CD4-positive, alpha-beta T cell (primary cell): ENCODE measurements at regions of chr11 and their contacts with region 1.

Region 1: GRCh38 chr11:64916775-64917662 is at the start of gene ATG2A:
- DNase-seq: peak; percentile 97 to 100 (median 99)
- ATAC-seq: peak; percentile 96
- H3K4me3 ChIP-seq: peak within 1 kb of the TSS; percentile 89
- H3K4me3 Mint-ChIP-seq: peak within 1 kb of the TSS; percentile 93
- H3K27ac ChIP-seq: peak within 1 kb of the TSS; percentile 66 to 78
- H3K27ac Mint-ChIP-seq: peak within 1 kb of the TSS; percentile 81
- H3K4me1 ChIP-seq: peaks cover 33% of the 10 kb centered on the region
- H3K4me1 Mint-ChIP-seq: peaks cover 26% of the 10 kb centered on the region
- H3K27me3 ChIP-seq: no peaks in the 10 kb centered on the region
- H3K27me3 Mint-ChIP-seq: no peaks in the 10 kb centered on the region
- CTCF ChIP-seq: no peak
- total RNA-seq, gene ATG2A: 189 to 198 TPM

Region 2: GRCh38 chr11:64276653-64277431 is 640.2 kb before region 1 on chr11:
- CTCF ChIA-PET with region 1: no interaction called
- POLR2A ChIA-PET with region 1: no interaction called
- intact Hi-C with region 1: no loop called
- DNase-seq: no peak
- ATAC-seq: no peak
- H3K4me3 ChIP-seq: no peak overlapping the region
- H3K4me3 Mint-ChIP-seq: no peak overlapping the region
- H3K27ac ChIP-seq: no peak overlapping the region
- H3K27ac Mint-ChIP-seq: no peak overlapping the region
- H3K4me1 ChIP-seq: peaks cover 11% of the 10 kb centered on the region
- H3K4me1 Mint-ChIP-seq: peaks cover 8% of the 10 kb centered on the region
- H3K27me3 ChIP-seq: no peaks in the 10 kb centered on the region
- H3K27me3 Mint-ChIP-seq: no peaks in the 10 kb centered on the region
- CTCF ChIP-seq: no peak

Region 3: DNA sequence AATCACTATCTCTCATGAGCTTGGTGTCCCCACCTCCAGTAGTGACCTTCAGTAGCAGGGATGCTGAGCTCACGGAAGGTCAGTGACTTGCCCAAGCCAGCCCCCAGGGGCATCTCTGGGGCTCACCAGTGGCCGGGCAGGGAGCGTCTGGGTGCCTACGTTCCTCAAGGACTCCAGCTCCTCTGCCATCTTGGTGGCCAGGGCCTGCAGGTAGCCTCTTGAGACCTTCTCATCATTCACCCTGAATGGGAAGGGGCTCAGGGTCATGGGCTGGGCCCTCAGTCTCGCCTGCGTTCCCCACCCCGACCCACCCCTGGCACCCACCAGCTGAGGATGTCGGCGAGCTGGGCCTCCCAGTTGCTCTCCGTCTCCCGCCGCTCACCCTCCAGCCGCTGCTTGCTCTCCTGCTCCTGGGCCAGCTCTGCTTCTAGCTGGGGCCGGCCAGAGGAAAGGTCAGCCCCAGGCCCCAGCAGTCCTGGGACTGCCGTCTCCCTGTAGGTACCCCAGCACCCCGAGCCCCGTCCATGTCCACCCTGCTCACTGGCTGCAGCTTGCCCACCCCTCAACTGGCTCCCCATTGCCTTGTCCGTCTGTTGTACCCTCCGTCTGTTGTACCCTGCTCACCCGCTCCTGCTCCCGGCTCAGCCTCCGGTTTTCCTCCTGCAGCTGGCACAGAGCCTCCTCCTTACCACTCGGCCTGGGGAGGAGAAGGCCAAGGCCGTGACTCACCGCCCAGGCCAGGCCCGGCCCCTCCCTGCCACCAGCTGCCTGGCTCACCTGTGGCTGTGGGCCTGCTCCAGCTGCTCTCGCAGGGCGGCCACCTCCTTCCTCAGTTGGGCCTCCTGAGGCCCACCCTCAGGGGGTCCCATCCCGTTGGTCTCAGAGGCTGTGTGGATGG is 82.0 kb before region 1 on chr11:
- CTCF ChIA-PET with region 1: no interaction called
- POLR2A ChIA-PET with region 1: no interaction called
- intact Hi-C with region 1: no loop called
- DNase-seq: no peak
- ATAC-seq: no peak
- H3K4me3 ChIP-seq: no peak overlapping the region
- H3K4me3 Mint-ChIP-seq: no peak overlapping the region
- H3K27ac ChIP-seq: no peak overlapping the region
- H3K27ac Mint-ChIP-seq: no peak overlapping the region
- H3K4me1 ChIP-seq: peaks cover 3% of the 10 kb centered on the region
- H3K4me1 Mint-ChIP-seq: no peaks in the 10 kb centered on the region
- H3K27me3 ChIP-seq: no peaks in the 10 kb centered on the region
- H3K27me3 Mint-ChIP-seq: no peaks in the 10 kb centered on the region
- CTCF ChIP-seq: no peak

Region 4: DNA sequence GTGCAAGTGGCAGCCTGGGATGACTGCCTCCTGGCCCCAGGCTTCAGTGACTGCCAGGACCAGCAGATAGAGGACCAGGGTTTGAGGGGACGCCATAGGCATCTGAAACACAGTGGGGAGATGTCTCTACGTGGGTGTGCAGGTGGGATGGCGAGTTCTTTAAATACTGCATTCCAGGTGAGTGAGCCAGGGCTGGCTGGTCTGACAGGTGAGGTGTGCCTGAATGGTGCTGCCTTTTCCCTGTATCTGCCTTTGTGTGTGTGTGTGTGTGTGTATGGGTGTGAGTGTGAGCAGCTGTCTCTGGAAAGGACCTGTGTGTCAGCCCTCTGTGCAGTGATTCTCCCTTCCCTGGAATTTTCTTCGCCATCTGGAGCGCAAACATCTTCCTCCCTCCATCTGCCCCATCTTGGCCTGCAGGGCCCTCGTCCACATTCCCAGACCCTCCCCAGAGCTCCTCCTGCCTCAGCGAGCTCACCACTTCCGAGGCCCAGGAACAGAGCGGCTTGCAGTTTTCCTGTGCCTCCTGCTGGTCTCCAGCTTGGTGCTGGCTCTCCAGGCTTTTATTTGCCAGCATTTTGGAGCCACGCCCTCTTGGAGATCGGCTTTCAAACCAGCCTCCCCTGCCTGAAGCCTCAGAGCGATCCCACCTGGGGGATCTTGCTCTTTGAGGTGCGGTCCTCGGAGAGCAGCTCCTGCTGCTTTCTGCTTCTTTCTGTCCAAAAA is 18.5 kb after region 1 on chr11 and contains the start of gene GPHA2:
- CTCF ChIA-PET with region 1: no interaction called
- POLR2A ChIA-PET with region 1: no interaction called
- intact Hi-C with region 1: no loop called
- DNase-seq: no peak
- ATAC-seq: no peak
- H3K4me3 ChIP-seq: no peak within 1 kb of the TSS
- H3K4me3 Mint-ChIP-seq: no peak within 1 kb of the TSS
- H3K27ac ChIP-seq: no peak within 1 kb of the TSS
- H3K27ac Mint-ChIP-seq: no peak within 1 kb of the TSS
- H3K4me1 ChIP-seq: no peaks in the 10 kb centered on the region
- H3K4me1 Mint-ChIP-seq: no peaks in the 10 kb centered on the region
- H3K27me3 ChIP-seq: no peaks in the 10 kb centered on the region
- H3K27me3 Mint-ChIP-seq: no peaks in the 10 kb centered on the region
- CTCF ChIP-seq: no peak
- total RNA-seq, gene GPHA2: 0.49 to 0.56 TPM

Region 5: DNA sequence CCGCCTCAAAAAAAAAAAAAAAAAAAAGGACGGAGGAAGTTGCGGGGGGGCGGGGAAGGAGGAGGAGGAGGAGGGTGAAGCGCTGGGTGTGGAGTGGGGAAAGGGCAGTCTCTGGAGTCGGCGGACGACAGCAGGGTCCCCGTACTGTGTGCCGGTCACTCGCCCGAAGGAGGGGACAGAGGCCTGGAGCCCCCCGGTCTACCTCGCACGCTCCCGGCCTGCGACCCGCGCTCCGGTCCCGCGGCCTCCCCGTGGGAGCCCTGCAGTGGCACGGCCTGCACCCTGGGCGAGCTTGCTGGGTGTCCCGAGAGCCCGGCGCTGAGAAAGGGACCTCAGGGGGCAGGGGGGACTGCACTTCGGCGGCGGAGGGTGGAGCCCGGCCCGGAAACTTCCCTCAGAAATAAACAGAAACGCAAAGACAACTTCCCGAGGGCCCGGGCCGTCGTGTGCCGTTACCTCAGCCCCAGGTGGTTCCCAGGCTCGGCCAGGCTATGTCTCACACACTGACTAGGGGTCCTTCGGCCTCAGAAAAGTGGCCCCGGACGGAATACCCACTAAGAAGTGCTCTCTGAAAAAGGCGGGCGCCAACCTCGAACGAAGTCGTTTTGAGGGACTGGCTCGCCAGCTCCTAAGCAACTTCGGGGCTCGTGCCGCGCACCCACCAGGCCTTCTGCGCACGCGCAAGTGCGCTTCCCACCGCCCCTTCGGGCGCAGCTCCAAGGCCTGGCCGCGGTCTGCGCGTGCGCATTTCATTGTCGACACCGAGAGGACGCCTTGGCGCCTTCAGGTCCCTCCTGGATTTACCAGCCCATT is 54.6 kb after region 1 on chr11 and contains the start of gene MAJIN:
- CTCF ChIA-PET with region 1: no interaction called
- POLR2A ChIA-PET with region 1: interaction called, 5 read pairs
- intact Hi-C with region 1: loop called in 1 of 2 experiments (anchors 5 kb)
- DNase-seq: peak; percentile 76 to 95 (median 90)
- ATAC-seq: peak; percentile 82
- H3K4me3 ChIP-seq: peak within 1 kb of the TSS; percentile 58
- H3K4me3 Mint-ChIP-seq: peak within 1 kb of the TSS; percentile 81
- H3K27ac ChIP-seq: peak within 1 kb of the TSS in 1 of 2 donors; percentile 29
- H3K27ac Mint-ChIP-seq: peak within 1 kb of the TSS; percentile 83
- H3K4me1 ChIP-seq: peaks cover 23% of the 10 kb centered on the region
- H3K4me1 Mint-ChIP-seq: peaks cover 26% of the 10 kb centered on the region
- H3K27me3 ChIP-seq: no peaks in the 10 kb centered on the region
- H3K27me3 Mint-ChIP-seq: no peaks in the 10 kb centered on the region
- CTCF ChIP-seq: no peak
- total RNA-seq, gene MAJIN: 0.50 to 0.55 TPM